H1 (cell line): ENCODE measurements at regions of chr20 and their contacts with region 1.

Region 1: DNA sequence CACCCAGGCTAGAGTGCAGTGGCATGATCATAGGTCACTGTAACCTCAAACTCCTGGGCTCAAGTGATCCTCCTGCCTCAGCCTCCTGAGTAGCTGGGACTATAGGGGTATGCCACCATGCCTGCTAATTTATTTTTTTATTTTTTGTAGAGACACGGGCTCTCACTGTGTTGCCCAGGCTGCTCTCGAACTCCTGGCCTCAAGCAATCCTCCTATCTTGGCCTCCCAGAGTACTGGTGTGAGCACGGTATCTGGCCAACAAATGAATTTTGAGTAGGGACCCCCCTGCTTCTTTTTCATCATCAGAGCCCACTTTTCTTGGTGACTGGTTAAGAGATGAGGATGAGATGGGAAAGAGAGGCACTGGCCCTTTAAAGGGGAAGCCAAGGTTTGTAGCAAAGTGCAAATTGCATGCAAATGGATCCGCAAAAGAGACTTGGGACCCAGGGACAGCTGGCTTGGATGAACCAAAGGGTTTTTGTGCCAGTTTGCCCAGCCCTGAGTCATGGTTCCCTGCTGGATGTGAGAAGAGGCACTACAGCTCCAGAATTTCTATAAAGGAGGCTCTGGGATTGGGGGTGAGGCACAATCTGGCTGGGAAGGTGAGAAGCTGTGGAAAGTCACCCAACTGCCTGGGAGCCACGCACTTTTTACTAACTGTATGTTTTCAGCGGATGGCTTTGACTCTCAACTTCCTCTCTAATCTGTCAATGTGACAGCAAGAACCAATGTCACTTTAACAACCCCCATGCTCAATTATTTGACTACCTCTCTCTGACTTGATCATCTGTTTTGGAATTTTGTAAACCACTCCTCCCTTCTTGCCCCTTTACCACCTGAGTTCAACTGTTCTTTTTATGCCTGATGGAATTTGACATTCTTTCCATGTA is 58.7 kb upstream of the RNF24 start:
- DNase-seq: peak in 1 of 2 experiments; percentile 38
- H3K4me3 ChIP-seq: no peak overlapping the region
- H3K27ac ChIP-seq: no peak overlapping the region
- H3K4me1 ChIP-seq: peaks cover 0 to 3% (median 0%) of the 10 kb centered on the region in 4 experiments; a peak in 1 of 7 replicates
- H3K27me3 ChIP-seq: no peaks in the 10 kb centered on the region
- CTCF ChIP-seq: no peak
- EP300 ChIP-seq: no peak
- POLR2A ChIP-seq: no peak
- RAD21 ChIP-seq: no peak

Region 2: GRCh38 chr20:3888622-3889488 is 185.2 kb before region 1 on chr20 and contains the start of gene PANK2:
- CTCF ChIA-PET with region 1: interaction called, 17 read pairs
- POLR2A ChIA-PET with region 1: interaction called, 6 read pairs
- DNase-seq: peak; percentile 91 to 98
- H3K4me3 ChIP-seq: peak within 1 kb of the TSS; percentile 68 to 100 (median 96)
- H3K27ac ChIP-seq: peak within 1 kb of the TSS; percentile 95
- H3K4me1 ChIP-seq: peaks cover 0 to 8% (median 5%) of the 10 kb centered on the region in 4 experiments; a peak in 4 of 7 replicates
- H3K27me3 ChIP-seq: no peaks in the 10 kb centered on the region; a peak in 1 of 7 replicates
- CTCF ChIP-seq: peak; percentile 18 to 31 (median 20); a peak in 3 of 4 replicates
- EP300 ChIP-seq: no peak
- POLR2A ChIP-seq: peak; percentile 81 to 91
- RAD21 ChIP-seq: peak; percentile 22 to 40
- total RNA-seq, gene PANK2: 57.5 and 62.0 TPM in 2 replicates

Region 3: DNA sequence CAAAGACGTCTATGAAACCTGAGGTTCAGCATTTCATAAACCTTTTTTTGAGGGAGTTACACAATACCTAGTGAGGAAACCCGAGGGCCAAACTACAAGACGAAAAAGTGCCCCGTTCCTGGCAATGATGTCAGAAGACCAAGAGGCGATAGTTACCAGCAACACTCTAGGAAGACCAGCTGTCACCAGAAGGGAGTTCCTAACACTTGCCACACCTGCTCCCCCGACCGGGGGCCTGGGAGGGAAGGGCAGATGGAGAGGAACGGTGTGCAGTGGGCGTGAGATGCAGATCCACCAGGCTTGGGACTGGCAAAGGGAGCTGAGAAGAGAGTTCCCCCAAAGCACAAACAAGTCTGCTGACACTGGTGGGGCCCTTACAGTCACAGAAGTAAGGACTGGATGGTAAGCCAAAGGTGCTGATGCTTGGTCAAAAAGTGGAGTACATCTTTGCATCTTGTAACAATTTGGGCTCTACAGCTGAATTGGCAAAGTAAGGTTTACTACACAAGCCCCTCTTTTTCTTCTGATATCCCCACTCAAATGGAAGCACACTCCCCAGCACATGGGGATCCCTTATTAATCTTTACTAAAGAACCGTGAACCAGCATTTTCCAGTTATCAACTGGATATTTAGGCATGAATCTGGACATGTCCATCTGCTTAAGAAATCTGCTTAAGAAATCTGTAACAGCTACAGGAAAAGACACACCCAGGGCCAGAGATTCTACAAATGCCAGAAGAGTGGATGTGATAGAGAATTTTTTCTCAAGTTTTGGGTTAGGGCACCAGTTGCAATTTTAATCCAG is 146.4 kb before region 1 on chr20:
- CTCF ChIA-PET with region 1: interaction called, 42 read pairs
- POLR2A ChIA-PET with region 1: interaction called, 57 read pairs
- DNase-seq: peak in 1 of 2 experiments; percentile 61
- H3K4me3 ChIP-seq: no peak overlapping the region
- H3K27ac ChIP-seq: no peak overlapping the region
- H3K4me1 ChIP-seq: peaks cover 0 to 19% (median 2%) of the 10 kb centered on the region in 4 experiments; a peak in 3 of 7 replicates
- H3K27me3 ChIP-seq: no peaks in the 10 kb centered on the region
- CTCF ChIP-seq: no peak
- EP300 ChIP-seq: no peak
- POLR2A ChIP-seq: peak; percentile 9 to 67; a peak in 2 of 3 replicates
- RAD21 ChIP-seq: no peak

Region 4: DNA sequence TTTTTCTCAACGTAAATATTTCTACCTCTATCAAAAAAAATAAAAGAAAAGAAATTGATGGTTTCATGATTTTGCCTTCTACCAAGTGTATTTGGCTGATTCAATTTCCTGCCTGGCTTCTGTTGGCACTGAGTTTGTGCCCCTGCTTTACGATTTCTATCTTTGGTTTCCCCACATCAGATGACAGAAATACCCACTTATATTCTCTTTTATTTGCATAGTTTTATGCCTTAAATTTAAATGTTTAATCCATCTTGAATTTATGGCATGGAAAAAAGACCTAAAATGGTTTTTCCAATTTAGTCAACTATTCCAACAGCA is 93.0 kb before region 1 on chr20:
- CTCF ChIA-PET with region 1: interaction called, 10 read pairs
- POLR2A ChIA-PET with region 1: interaction called, 3 read pairs
- DNase-seq: no peak
- H3K4me3 ChIP-seq: no peak overlapping the region
- H3K27ac ChIP-seq: no peak overlapping the region
- H3K4me1 ChIP-seq: no peaks in the 10 kb centered on the region
- H3K27me3 ChIP-seq: no peaks in the 10 kb centered on the region
- CTCF ChIP-seq: no peak
- EP300 ChIP-seq: no peak
- POLR2A ChIP-seq: no peak
- RAD21 ChIP-seq: no peak

Region 5: DNA sequence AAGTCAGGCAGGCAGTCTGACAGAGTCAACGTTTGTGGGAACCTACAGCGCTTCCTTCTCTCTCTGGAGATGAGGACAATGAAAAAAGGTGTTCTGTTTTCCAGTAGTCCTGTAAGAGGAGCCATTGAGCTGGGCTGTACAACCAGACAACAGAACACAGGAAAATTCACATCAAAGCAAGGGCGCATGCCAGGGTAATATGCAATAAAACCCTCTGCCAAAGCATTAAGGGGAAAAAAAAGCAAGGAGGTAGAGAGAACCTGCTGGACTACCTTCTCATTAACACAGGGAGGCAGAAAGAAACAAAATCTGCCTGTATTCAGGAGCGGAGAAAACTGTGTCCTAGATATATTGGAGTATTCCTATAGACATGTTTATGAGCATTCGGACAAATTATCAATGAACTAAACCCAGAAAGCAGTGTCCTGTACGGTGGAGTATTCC is 60.0 kb before region 1 on chr20:
- CTCF ChIA-PET with region 1: interaction called, 48 read pairs
- POLR2A ChIA-PET with region 1: no interaction called
- DNase-seq: no peak
- H3K4me3 ChIP-seq: peak overlapping the region; percentile 71 to 84 (median 81); a peak in 6 of 8 replicates
- H3K27ac ChIP-seq: no peak overlapping the region
- H3K4me1 ChIP-seq: peaks cover 5 to 26% (median 18%) of the 10 kb centered on the region in 4 experiments; a peak in 6 of 7 replicates
- H3K27me3 ChIP-seq: no peaks in the 10 kb centered on the region; a peak in 1 of 7 replicates
- CTCF ChIP-seq: peak in 2 of 3 experiments; percentile 25 to 32; a peak in 2 of 4 replicates
- EP300 ChIP-seq: no peak
- POLR2A ChIP-seq: no peak
- RAD21 ChIP-seq: peak; percentile 57 to 61

Region 6: DNA sequence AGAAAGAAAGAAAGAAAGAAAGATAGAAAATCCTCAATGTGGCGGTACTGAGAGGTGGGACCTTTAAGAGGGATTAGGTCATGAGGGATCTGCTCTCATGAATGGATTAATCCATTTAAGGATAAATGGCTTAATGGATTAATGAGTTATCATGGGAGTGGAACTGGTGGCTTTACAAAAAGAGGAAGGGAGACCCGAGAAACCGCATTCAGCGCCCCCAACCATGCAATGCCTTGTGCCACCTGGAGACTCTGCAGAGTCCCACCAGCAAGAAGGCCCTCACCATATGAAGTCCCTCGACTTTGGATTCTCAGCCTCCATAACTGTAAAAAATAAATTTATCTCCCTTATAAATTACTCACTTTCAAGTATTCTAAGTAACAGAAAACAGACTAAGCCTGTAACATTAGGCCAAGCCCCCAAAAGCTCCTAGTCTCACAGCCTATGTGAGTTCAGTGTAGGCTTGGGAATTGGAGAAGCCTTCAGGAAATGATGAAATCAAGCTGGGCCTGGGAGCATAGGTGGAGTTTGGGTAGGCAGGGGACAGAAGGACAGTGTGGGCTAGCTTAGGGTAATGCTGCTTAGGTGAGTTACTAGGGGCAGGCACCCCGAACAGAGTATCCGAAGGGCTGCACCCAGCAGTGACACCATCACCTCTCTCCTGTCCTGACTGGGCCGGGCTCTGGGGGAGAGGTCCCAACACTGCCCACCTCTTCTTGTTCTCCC is 22.5 kb before region 1 on chr20:
- CTCF ChIA-PET with region 1: interaction called, 34 read pairs
- POLR2A ChIA-PET with region 1: no interaction called
- DNase-seq: no peak
- H3K4me3 ChIP-seq: no peak overlapping the region
- H3K27ac ChIP-seq: no peak overlapping the region
- H3K4me1 ChIP-seq: peaks cover 0 to 6% (median under 1%) of the 10 kb centered on the region in 4 experiments; a peak in 3 of 7 replicates
- H3K27me3 ChIP-seq: 0 out of 7 replicates have a peak, but pooled peaks cover 0 to 2% (median 0%) of the 10 kb centered on the region in 4 experiments
- CTCF ChIP-seq: no peak
- EP300 ChIP-seq: no peak
- POLR2A ChIP-seq: no peak
- RAD21 ChIP-seq: no peak